B cell (primary cell): ENCODE measurements at regions of chr6 and their contacts with region 1.

Region 1: GRCh38 chr6:81752138-81752920 is at the start of gene TENT5A:
- DNase-seq: peak; percentile 91
- ATAC-seq: peak; percentile 69
- H3K4me3 ChIP-seq: peak within 1 kb of the TSS; percentile 79 to 94 (median 83)
- H3K4me3 Mint-ChIP-seq: peak within 1 kb of the TSS; percentile 93
- H3K27ac ChIP-seq: peak within 1 kb of the TSS; percentile 71 to 81
- H3K27ac Mint-ChIP-seq: peak within 1 kb of the TSS; percentile 98
- H3K4me1 ChIP-seq: peaks cover 25 to 33% of the 10 kb centered on the region in 2 donors
- H3K4me1 Mint-ChIP-seq: peaks cover 38% of the 10 kb centered on the region
- H3K27me3 ChIP-seq: no peaks in the 10 kb centered on the region
- H3K27me3 Mint-ChIP-seq: peaks cover 4% of the 10 kb centered on the region
- CTCF ChIP-seq: peak; percentile 33
- total RNA-seq, gene TENT5A: 9.4 and 11.1 TPM in 2 replicates

Region 2: GRCh38 chr6:79869600-79870084 is 1882.7 kb before region 1 on chr6:
- CTCF ChIA-PET with region 1: interaction called, 4 read pairs
- POLR2A ChIA-PET with region 1: no interaction called
- intact Hi-C with region 1: loop called (anchors 2 kb)
- DNase-seq: peak; percentile 83
- ATAC-seq: peak; percentile 100
- H3K4me3 ChIP-seq: peak overlapping the region in 3 of 5 experiments; percentile 27 to 52 (median 38)
- H3K4me3 Mint-ChIP-seq: peak overlapping the region; percentile 61
- H3K27ac ChIP-seq: no peak overlapping the region
- H3K27ac Mint-ChIP-seq: peak overlapping the region; percentile 59
- H3K4me1 ChIP-seq: peaks cover 4 to 9% of the 10 kb centered on the region in 2 donors
- H3K4me1 Mint-ChIP-seq: peaks cover 7% of the 10 kb centered on the region
- H3K27me3 ChIP-seq: peaks cover 0 to 8% (median 0%) of the 10 kb centered on the region in 4 experiments
- H3K27me3 Mint-ChIP-seq: peaks cover 4% of the 10 kb centered on the region
- CTCF ChIP-seq: peak; percentile 98

Region 3: GRCh38 chr6:80338201-80338836 is 1414.0 kb before region 1 on chr6:
- CTCF ChIA-PET with region 1: interaction called, 31 read pairs
- POLR2A ChIA-PET with region 1: no interaction called
- intact Hi-C with region 1: no loop called
- DNase-seq: peak; percentile 61
- ATAC-seq: peak; percentile 64
- H3K4me3 ChIP-seq: no peak overlapping the region
- H3K4me3 Mint-ChIP-seq: no peak overlapping the region
- H3K27ac ChIP-seq: no peak overlapping the region
- H3K27ac Mint-ChIP-seq: no peak overlapping the region
- H3K4me1 ChIP-seq: no peaks in the 10 kb centered on the region
- H3K4me1 Mint-ChIP-seq: peaks cover 4% of the 10 kb centered on the region
- H3K27me3 ChIP-seq: no peaks in the 10 kb centered on the region
- H3K27me3 Mint-ChIP-seq: no peaks in the 10 kb centered on the region
- CTCF ChIP-seq: peak; percentile 85

Region 4: DNA sequence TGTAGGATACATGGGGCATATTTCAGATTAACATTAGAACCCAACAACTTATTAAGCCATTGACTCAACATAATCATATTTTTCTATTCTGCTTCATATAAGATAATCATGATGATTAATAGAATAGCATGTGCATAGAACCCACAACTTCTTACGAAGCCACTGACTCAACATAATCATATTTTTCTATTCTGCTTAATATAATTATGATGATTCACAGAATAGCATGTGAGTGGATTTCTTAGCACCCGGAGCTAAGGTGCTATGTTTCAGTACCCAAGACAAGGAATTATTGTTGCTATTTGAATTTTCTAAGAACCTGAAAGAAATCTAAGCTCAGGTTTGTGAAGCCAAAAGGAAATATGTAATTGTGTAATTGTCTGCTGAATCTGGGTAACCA is 96.6 kb before region 1 on chr6:
- CTCF ChIA-PET with region 1: no interaction called
- POLR2A ChIA-PET with region 1: no interaction called
- intact Hi-C with region 1: no loop called
- DNase-seq: no peak
- ATAC-seq: no peak
- H3K4me3 ChIP-seq: no peak overlapping the region
- H3K4me3 Mint-ChIP-seq: no peak overlapping the region
- H3K27ac ChIP-seq: no peak overlapping the region
- H3K27ac Mint-ChIP-seq: no peak overlapping the region
- H3K4me1 ChIP-seq: no peaks in the 10 kb centered on the region
- H3K4me1 Mint-ChIP-seq: no peaks in the 10 kb centered on the region
- H3K27me3 ChIP-seq: no peaks in the 10 kb centered on the region
- H3K27me3 Mint-ChIP-seq: no peaks in the 10 kb centered on the region
- CTCF ChIP-seq: no peak

Region 5: DNA sequence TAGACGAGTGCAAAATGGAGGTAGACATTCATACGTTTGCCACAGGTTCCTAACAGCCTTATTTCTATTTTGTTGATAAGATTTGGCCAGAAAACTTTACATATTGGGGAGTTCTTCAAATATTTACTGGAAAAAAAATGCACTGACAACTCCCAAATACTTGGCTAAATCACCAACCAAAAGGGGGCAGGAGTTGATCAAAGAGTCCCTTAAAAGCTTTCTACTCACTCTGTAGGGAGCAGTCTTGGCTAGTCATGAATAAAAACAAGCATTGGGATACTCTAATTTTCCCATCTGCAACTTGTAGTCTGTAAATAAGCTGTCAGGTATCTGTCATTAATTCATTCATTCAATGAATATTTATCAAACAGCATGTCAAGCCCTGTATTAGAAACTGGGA is 18.2 kb before region 1 on chr6:
- CTCF ChIA-PET with region 1: interaction called, 13 read pairs
- POLR2A ChIA-PET with region 1: interaction called, 3 read pairs
- intact Hi-C with region 1: no loop called
- DNase-seq: no peak
- ATAC-seq: no peak
- H3K4me3 ChIP-seq: no peak overlapping the region
- H3K4me3 Mint-ChIP-seq: no peak overlapping the region
- H3K27ac ChIP-seq: no peak overlapping the region
- H3K27ac Mint-ChIP-seq: no peak overlapping the region
- H3K4me1 ChIP-seq: no peaks in the 10 kb centered on the region
- H3K4me1 Mint-ChIP-seq: no peaks in the 10 kb centered on the region
- H3K27me3 ChIP-seq: no peaks in the 10 kb centered on the region
- H3K27me3 Mint-ChIP-seq: no peaks in the 10 kb centered on the region
- CTCF ChIP-seq: no peak

Region 6: DNA sequence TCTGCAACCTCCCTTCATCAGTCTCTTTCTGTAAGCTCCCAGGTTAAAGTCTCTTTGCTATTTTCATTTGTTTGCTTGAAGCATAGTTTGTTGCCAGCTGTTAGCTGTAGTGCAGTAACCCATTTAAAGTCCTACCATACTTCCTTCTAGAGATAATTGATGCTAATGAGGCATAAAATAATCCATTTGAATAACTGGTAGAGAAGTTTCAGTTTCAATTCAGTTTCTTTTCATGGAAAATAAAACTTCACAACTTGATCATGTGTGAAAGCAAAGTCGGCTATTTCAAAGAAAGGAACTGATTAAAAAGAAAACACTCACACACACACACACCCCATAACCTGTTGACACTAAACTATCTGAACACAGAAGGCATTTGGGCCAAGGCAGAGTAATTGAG is 68.7 kb after region 1 on chr6:
- CTCF ChIA-PET with region 1: no interaction called
- POLR2A ChIA-PET with region 1: no interaction called
- intact Hi-C with region 1: loop called (anchors 5 kb)
- DNase-seq: peak; percentile 29
- ATAC-seq: peak; percentile 61
- H3K4me3 ChIP-seq: no peak overlapping the region
- H3K4me3 Mint-ChIP-seq: peak overlapping the region; percentile 32
- H3K27ac ChIP-seq: peak overlapping the region; percentile 21 to 68
- H3K27ac Mint-ChIP-seq: peak overlapping the region; percentile 79
- H3K4me1 ChIP-seq: peaks cover 41 to 44% of the 10 kb centered on the region in 2 donors
- H3K4me1 Mint-ChIP-seq: peaks cover 38% of the 10 kb centered on the region
- H3K27me3 ChIP-seq: no peaks in the 10 kb centered on the region
- H3K27me3 Mint-ChIP-seq: peaks cover 3% of the 10 kb centered on the region
- CTCF ChIP-seq: no peak

Region 7: GRCh38 chr6:83192871-83193746 is 1440.8 kb after region 1 on chr6 and contains the starts of genes PGM3 and RWDD2A:
- CTCF ChIA-PET with region 1: no interaction called
- POLR2A ChIA-PET with region 1: no interaction called
- intact Hi-C with region 1: loop called (anchors 5 kb)
- DNase-seq: peak; percentile 94
- ATAC-seq: peak; percentile 97
- H3K4me3 ChIP-seq: peak within 1 kb of the TSS; percentile 58 to 93 (median 85)
- H3K4me3 Mint-ChIP-seq: peak within 1 kb of the TSS; percentile 100
- H3K27ac ChIP-seq: peak within 1 kb of the TSS; percentile 58 to 94
- H3K27ac Mint-ChIP-seq: peak within 1 kb of the TSS; percentile 97
- H3K4me1 ChIP-seq: peaks cover 23% of the 10 kb centered on the region in 2 donors
- H3K4me1 Mint-ChIP-seq: peaks cover 39% of the 10 kb centered on the region
- H3K27me3 ChIP-seq: no peaks in the 10 kb centered on the region
- H3K27me3 Mint-ChIP-seq: no peaks in the 10 kb centered on the region
- CTCF ChIP-seq: no peak
- total RNA-seq, gene PGM3: 24.5 and 35.3 TPM in 2 replicates
- total RNA-seq, gene RWDD2A: 2.7 and 2.9 TPM in 2 replicates